Panc1 (cell line): ENCODE measurements at regions of chr17 and their contacts with region 1.

Region 1: GRCh38 chr17:78497115-78497540 is 80.1 kb downstream of the DNAH17 start:
- DNase-seq: peak; percentile 58
- ATAC-seq: peak; percentile 96
- H3K4me3 ChIP-seq: no peak overlapping the region
- H3K27ac ChIP-seq: no peak overlapping the region
- H3K4me1 ChIP-seq: peaks cover 6% of the 10 kb centered on the region; the same call in 1 of the 2 replicates
- H3K27me3 ChIP-seq: no peaks in the 10 kb centered on the region
- CTCF ChIP-seq: peak; percentile 91

Region 2: DNA sequence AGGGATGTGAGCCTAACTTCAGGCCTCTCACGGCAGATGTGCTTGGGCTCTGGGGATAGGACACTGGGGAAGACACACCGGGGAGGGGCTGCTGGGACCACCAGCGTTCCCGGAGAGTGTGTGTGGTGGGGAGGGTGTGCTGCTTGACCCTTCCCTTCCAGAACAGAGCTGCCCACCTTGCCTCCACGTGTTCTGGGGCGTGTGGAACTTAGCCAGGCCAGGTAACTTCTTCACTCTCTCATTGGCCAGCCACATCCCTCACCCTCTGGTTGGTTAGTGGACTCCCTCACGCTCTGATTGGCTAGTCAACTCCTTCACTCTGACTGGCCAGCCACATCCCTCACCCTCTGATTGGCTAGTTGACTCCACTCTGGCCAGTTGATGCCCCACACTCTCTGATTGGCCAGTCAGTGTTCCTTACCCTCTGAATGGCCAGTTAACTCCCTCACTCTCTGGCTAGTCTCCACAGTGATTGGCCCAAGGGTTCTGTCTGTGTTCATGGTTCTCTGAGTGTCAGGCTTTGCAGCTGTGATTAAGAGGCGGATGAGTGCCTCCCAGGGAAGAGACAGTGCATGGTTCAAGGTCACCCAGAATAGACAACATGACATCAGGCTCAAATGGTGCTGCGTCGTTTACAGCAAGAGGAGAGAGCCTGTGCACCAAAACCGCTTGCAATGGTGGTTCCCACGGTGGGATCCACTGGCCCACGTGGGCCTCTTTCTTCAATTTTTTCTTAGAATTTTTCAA is 255.7 kb before region 1 on chr17:
- CTCF ChIA-PET with region 1: no interaction called
- POLR2A ChIA-PET with region 1: no interaction called
- in situ Hi-C with region 1: no loop called
- intact Hi-C with region 1: no loop called
- DNase-seq: no peak
- ATAC-seq: peak; percentile 52
- H3K4me3 ChIP-seq: no peak overlapping the region
- H3K27ac ChIP-seq: no peak overlapping the region
- H3K4me1 ChIP-seq: no peaks in the 10 kb centered on the region
- H3K27me3 ChIP-seq: no peaks in the 10 kb centered on the region
- CTCF ChIP-seq: no peak

Region 3: DNA sequence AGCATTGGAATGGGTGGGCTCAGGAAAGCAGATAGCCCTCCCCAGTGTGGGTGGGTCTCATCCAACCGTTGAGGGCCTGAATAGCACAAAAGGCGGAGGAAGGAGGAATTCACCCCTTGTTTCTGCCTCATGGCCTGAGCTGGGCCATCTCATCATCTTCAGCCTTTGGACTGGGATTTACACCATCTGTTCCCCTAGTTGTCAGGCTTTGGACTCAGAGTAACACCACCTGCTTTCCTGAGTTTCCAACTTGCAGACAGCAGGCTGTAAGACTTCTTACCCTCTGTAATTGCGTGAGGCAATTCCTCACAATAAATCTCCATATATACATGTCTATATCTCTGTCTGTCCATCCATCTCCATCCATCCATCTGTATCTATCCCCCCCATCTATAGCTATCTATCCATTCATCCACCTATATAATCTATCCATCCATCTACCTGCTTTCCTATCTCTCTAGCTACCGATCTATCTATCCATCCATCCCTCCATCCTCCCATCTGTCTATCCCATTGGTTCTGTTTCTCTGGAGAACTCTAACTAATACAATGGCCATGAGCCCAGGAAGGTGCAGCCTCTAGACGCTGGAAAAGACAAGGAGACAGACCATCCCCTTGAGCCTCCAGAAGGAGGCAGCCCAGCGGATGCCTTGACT is 58.7 kb after region 1 on chr17:
- CTCF ChIA-PET with region 1: no interaction called
- POLR2A ChIA-PET with region 1: no interaction called
- in situ Hi-C with region 1: no loop called
- intact Hi-C with region 1: no loop called
- DNase-seq: no peak
- ATAC-seq: no peak
- H3K4me3 ChIP-seq: no peak overlapping the region
- H3K27ac ChIP-seq: no peak overlapping the region
- H3K4me1 ChIP-seq: no peaks in the 10 kb centered on the region
- H3K27me3 ChIP-seq: no peaks in the 10 kb centered on the region
- CTCF ChIP-seq: no peak

Region 4: DNA sequence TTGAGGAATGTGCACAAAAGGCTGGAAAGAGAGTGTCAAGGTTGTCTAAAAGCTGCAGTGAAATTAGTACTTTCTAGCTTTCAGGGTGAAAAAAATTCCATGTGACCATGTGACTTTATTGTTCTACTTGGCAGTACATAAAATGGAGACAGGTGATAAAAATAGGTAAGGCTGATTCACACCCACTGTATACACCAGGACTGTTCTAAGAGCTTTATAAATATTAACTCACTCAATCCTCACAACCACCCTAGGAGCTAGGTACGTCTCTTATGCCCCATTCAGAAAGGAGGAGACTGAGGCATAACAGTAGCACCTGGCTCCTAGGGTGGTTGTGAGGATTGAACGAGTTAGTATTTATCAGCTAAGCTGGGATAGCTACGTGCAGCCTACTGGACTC is 108.3 kb after region 1 on chr17:
- CTCF ChIA-PET with region 1: interaction called, 3 read pairs
- POLR2A ChIA-PET with region 1: no interaction called
- in situ Hi-C with region 1: no loop called
- intact Hi-C with region 1: loop called (anchors 2 kb)
- DNase-seq: no peak
- ATAC-seq: no peak
- H3K4me3 ChIP-seq: no peak overlapping the region
- H3K27ac ChIP-seq: no peak overlapping the region
- H3K4me1 ChIP-seq: peaks cover 4% of the 10 kb centered on the region; the same call in 1 of the 2 replicates
- H3K27me3 ChIP-seq: no peaks in the 10 kb centered on the region
- CTCF ChIP-seq: no peak

Region 5: DNA sequence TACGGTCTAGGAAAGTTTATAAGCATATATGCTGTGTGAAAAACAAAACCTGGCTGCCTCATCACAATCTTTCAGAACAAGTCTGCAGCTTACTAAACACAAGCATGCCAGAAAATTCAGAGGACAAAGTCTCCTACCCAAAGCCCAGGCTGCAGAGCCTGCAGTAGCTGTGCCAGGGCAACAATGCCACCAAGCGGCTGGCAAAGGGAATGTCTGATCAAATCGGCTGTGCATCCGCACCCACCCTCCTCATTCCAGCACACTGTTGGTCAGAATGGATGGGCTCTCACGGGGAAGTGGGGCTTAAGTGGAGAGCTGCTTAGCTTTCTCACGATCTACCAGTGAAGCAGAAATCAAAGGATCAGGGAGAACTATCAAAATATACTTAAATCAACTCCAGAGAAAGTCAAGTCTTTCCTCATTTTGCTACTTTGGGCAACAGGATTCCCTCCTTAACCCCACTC is 211.4 kb after region 1 on chr17:
- CTCF ChIA-PET with region 1: interaction called, 11 read pairs
- POLR2A ChIA-PET with region 1: no interaction called
- in situ Hi-C with region 1: no loop called
- intact Hi-C with region 1: loop called (anchors 2 kb)
- DNase-seq: peak; percentile 41
- ATAC-seq: peak; percentile 98
- H3K4me3 ChIP-seq: no peak overlapping the region
- H3K27ac ChIP-seq: no peak overlapping the region; the same call in 1 of the 2 replicates
- H3K4me1 ChIP-seq: peaks cover 15% of the 10 kb centered on the region; the same call in 1 of the 2 replicates
- H3K27me3 ChIP-seq: no peaks in the 10 kb centered on the region
- CTCF ChIP-seq: peak; percentile 96

Region 6: DNA sequence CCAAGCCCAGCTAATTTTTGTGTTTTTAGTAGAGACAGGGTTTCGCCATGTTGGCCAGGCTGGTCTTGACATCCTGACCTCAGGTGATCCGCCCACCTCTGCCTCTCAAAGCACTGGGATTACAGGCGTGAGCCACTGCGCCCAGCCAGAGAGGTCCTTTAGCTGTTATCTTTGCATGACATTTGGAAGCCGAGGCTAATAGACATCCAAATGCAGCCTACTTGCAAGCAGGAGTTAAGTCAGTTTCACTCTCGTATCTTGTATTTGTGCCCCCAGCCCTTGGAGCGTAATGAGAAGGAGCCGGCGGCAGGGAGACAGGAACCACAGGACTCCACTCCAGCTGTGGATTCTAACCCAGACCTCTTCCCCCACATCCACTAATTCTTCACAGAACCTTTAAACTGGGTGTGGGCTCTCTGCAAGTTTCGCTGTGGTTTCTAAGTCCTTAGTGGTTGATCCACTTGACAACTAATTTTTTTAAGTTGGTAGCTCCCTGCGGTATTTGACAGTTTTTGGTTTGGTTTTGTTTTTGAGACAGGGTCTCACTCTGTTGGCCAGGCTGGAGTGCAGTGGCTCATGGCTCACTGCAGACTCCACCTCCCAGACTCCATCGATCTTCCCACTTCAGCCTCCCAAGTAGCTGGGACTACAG is 288.0 kb after region 1 on chr17:
- CTCF ChIA-PET with region 1: interaction called, 10 read pairs
- POLR2A ChIA-PET with region 1: no interaction called
- in situ Hi-C with region 1: no loop called
- intact Hi-C with region 1: no loop called
- DNase-seq: no peak
- ATAC-seq: no peak
- H3K4me3 ChIP-seq: no peak overlapping the region
- H3K27ac ChIP-seq: no peak overlapping the region
- H3K4me1 ChIP-seq: peaks cover 4% of the 10 kb centered on the region
- H3K27me3 ChIP-seq: no peaks in the 10 kb centered on the region
- CTCF ChIP-seq: no peak

Region 7: DNA sequence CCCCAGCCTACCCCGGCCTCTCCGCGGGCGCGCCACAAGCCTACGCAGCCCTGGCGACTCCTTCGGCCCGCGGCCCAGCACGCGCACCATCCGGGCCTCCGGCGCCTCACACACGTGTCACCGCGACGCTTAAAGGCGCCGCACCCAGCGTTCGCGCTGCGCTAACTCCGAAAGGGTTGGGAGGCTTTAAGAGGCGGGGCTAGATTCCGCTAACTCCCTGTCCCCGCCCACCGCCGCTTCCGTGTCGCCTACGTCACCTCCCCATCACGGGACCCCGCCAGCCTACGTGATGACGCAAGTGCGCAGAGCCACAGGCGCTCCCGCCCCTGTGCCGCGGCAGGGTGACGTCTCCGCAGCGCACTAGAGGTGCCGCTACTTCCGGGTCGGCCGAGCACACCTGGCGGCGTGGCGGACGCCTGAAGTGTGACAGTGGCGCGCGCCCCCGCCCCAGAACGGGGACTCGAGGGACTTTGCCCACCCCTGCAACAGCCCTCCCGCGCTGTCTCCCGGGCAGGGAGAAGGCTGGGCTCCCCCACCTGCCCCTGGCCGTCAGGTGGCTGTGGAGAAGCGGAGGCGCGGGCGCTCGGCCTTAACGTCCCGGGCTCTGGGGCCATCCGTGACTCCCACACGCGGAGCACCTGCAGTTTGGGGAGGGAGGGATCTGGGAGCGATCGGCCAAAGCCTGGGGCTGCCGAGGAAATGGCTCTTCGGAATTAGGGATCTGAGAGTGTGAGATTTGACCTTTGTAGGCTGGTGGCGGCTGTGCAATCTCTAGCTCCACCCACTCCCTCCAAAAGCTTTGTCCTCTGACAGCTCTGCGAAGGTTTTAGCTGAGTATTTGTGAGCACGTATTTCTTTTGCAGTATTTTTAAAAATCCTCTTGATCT is 343.8 kb after region 1 on chr17 and contains the start of gene USP36:
- CTCF ChIA-PET with region 1: no interaction called
- POLR2A ChIA-PET with region 1: no interaction called
- in situ Hi-C with region 1: loop called (anchors 25 kb)
- intact Hi-C with region 1: no loop called
- DNase-seq: peak; percentile 94
- ATAC-seq: peak; percentile 97
- H3K4me3 ChIP-seq: peak within 1 kb of the TSS; percentile 88 to 94
- H3K27ac ChIP-seq: peak within 1 kb of the TSS; percentile 92
- H3K4me1 ChIP-seq: peaks cover 24% of the 10 kb centered on the region
- H3K27me3 ChIP-seq: no peaks in the 10 kb centered on the region
- CTCF ChIP-seq: no peak
- total RNA-seq, gene USP36: 113 TPM